Posterior cingulate gyrus (tissue), 11 donors: ENCODE measurements at regions of chr15 and their contacts with region 1.

Region 1: DNA sequence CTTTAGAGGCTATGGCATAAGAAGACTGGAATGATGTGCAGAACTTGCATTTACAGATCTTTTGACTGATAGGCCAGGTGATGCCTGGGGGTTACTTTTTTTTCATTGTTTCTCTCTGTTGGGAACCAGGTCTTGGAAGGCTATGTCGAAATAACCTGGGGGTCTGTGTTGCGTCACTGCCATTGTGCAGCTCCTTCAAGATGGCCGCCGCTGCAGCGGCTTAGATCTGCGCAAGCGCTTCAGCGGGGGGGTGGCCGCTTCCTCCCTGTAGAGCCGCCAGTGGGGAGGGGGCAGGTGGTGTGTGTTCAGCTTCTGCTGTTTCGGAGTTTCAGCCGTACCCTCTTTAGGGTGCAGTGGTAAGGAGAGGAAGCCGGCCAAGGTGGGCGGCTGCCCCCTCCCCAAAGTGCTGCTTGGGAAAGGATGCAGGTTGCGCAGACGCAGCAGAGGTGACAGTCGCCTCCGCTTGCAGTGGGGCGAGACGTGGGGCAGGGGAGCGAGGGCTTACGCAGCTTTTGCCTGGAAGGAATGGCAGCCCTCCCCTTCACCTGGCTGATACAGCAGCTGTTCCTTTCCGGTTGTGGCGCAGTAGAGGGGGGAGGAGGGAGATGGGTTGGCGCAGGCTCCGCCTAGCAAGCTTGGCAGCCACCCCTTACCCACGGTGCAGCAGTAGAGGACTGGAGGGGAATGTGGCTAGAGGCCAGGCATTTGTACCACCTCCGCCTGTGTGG is 1.5 kb downstream of the SNRPN start:
- DNase-seq: peak; percentile 45 to 94 (median 72)

Region 2: DNA sequence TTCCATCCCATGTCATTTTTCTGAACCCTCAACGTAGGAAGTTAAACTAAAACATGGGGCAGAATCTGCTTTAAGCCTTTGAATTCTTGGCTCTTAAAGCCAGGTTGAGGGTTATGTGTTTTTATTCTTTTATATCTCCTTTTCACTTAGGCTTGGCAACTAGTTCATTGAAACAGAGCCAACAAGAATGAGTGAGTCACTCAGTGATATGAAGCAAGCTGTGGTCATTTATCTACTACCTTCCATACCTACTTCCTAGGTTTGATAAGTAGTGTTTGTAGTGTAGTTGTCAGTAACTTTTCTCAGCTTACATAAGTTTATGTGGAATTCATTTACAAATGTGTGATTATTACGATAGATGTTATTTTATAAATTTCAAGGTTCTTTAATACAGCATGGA is 66.0 kb after region 1 on chr15:
- intact Hi-C with region 1: no loop called
- DNase-seq: no peak

Region 3: DNA sequence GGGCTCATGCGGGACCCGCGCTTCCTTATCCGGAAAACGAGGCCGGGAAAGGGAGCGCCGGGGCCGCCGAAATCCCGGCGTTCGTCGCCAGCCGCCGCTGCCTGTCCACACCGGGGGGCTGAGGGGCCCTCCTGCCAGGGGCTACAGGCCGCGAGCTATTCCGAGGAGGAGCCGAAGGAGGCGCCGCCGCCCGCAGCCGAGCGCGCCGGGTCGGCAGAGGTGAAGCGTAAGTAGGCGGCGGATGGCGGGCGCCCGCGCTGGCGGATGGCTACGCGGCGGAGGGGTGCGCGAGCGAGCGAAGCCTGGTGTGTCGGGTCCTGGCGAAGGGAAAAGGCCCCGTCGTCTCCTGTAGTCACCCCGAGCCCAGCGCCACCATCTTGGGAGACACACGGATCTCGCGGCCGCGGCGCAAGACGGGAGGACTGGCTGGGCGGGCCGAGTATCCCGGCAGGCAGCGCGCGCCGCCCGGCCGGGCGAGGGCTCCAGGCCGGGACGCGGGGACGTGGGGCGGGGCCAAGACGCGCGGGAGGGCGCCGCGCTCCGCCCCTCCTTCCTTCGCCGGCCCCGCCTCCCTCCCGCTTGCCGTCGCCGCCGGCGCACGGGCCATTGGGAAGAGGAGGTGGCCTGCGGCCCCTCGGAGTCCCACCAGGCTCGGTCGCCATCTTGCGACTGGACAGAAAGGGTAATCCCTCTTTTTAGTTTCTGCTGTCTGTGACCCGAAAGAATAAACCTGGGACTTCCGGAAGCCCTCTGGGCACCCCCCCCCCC is 482.5 kb after region 1 on chr15 and contains the start of gene UBE3A:
- intact Hi-C with region 1: loop called (anchors 10 kb)
- DNase-seq: peak; percentile 86 to 99 (median 90)